Activated T-helper 2 cell treated with anti-CD3 and anti-CD28 coated beads, Interferon-gamma antibody, Interleukin-2, Interleukin-4, amounts not matched to agents 10 μg/mL and 5 μg/mL and 100 μg/mL, durations not matched to agents 14 hours and 24 hours and 36 hours (primary cell): ENCODE measurements at regions of chr6 and their contacts with region 1.

Region 1: DNA sequence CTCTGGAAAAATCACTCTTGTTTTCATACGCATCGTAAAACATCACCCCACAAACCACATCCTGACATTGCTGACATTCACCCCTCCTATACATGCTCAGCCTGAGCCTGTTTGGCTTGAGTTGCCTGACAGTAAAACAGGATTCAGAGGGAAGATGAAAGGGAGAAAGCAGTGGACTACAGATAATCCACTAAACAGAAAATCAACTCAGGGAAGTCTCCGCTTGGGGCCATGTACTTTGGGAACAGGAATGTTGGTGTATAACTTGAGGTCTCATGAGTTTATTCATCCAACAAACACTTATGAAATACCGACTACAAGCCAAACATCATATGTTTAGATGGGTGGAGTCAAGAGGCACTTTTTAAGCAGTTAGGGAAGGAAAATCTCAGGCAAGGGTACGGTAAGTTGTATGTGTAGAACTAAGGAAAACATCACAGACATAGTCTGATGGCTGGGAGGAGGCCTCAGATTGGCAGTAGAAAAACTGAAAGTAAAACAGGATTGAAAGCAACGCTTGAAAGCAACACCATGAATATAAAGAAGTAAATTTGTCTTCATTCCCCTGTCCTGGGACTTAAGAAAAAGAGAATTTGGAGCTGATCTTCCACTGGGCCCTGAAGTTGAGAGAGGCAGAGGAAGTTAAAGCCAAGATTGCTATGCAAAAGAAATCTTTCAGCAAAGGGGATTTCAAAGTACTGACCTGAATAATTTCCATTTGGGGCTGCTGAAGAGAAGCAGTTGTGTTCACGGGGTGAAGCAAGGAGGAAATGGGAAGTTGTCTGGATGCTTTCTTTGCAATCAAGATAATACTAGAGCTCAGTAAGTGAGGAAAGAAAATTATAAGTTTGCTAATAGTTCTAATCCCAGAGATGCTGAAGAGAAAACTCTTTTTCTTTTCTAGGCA is 28.8 kb downstream of the PDE7B start:
- DNase-seq: peak; percentile 64
- H3K4me3 Mint-ChIP-seq: peak overlapping the region; percentile 82
- H3K27ac Mint-ChIP-seq: peak overlapping the region; percentile 98
- H3K4me1 Mint-ChIP-seq: peaks cover 66% of the 10 kb centered on the region
- H3K27me3 Mint-ChIP-seq: no peaks in the 10 kb centered on the region

Region 2: DNA sequence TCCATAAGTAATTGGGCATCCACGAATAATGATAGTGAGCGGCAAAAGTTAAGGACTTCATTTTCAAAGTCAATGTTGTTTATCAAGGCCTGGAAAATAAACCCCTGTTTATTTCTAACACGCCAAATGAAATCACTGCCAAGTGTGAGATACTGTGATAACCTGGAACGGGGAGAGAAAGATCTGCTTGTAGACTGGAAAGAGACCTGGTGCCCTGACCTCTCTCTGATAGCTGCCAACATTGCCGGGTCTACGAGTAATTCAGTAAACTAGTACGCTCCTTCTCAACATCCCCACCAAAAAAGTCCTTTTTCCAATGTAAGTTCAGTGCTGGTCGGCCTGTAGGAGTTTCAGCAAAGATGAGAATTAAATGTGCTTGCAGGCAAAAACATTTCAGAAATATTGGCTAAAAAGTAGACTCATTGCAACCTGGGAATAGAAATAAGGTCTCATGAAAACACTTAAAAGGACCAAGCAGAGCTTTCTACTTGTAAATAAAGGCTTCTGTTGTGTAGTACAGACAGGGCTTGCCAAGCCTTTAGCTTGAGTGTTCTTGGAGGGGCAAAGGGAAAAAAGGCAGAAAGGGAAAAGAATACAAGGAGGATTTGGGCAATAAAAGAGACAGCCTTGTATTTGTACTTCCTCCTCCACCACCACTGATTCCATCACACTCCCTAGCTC is 15.1 kb after region 1 on chr6:
- intact Hi-C with region 1: loop called (anchors 2 kb)
- DNase-seq: no peak
- H3K4me3 Mint-ChIP-seq: no peak overlapping the region
- H3K27ac Mint-ChIP-seq: no peak overlapping the region
- H3K4me1 Mint-ChIP-seq: peaks cover 24% of the 10 kb centered on the region
- H3K27me3 Mint-ChIP-seq: no peaks in the 10 kb centered on the region

Region 3: DNA sequence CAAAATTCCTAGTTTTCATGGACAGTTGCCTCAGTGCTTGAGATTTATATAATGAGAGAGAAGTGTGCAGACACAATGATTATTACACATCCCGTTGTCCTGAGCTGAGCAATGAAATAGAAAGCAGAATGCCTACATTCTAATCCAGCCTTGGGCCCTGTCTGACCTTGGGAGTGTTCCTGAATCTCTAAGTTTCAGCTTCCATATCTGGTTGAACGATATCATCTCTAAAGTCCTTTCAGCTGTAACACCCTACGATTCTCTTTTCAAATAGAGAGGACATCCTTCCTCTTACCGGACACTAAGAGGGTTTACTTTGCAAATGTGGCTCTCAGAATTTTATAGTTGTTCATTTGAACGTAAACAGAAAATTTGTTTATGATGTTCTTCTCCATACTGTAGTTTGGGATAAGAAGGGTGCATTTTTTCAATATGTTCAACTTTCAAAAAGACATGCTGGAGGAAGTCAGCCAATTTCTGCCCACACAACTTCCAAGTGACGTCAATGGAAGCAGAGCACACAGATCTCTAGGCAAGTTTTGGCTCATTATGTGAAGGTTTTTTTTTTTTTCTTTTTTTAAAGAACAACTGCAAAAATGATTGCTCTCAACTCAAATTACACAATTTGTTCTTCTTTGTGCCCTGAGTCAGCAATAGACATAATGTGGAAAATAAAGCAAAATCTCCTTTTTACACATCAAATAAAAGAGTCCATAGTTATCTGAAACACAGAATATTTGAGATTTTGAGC is 21.6 kb after region 1 on chr6:
- intact Hi-C with region 1: loop called (anchors 2 kb)
- DNase-seq: no peak
- H3K4me3 Mint-ChIP-seq: peak overlapping the region; percentile 52
- H3K27ac Mint-ChIP-seq: peak overlapping the region; percentile 86
- H3K4me1 Mint-ChIP-seq: peaks cover 47% of the 10 kb centered on the region
- H3K27me3 Mint-ChIP-seq: no peaks in the 10 kb centered on the region

Region 4: DNA sequence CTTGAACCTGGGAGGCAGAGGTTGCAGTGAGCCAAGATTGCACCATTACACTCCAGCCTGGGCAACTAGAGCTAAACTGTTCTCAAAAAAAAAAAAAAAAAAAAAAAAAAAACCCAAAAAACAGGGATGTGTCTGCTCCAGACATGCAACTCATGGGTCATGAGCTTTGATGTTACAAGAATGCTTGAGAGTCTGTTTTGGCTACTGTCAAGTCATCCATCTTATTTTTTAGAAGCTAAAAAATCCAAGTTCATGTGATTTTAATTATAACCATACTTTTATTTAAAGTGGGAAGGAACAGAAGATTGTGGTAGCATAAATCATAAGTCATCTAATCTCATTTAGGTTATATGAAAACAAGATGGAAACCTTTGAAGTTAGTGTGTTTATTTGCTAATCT is 91.8 kb after region 1 on chr6:
- intact Hi-C with region 1: no loop called
- DNase-seq: no peak
- H3K4me3 Mint-ChIP-seq: no peak overlapping the region
- H3K27ac Mint-ChIP-seq: no peak overlapping the region
- H3K4me1 Mint-ChIP-seq: peaks cover 9% of the 10 kb centered on the region
- H3K27me3 Mint-ChIP-seq: no peaks in the 10 kb centered on the region

Region 5: GRCh38 chr6:136289579-136290409 is 409.5 kb after region 1 on chr6 and contains the start of gene BCLAF1:
- intact Hi-C with region 1: loop called (anchors 10 kb)
- DNase-seq: peak; percentile 100
- H3K4me3 Mint-ChIP-seq: peak within 1 kb of the TSS; percentile 100
- H3K27ac Mint-ChIP-seq: peak within 1 kb of the TSS; percentile 100
- H3K4me1 Mint-ChIP-seq: peaks cover 32% of the 10 kb centered on the region
- H3K27me3 Mint-ChIP-seq: no peaks in the 10 kb centered on the region
- total RNA-seq, gene BCLAF1: 228 and 242 TPM in 2 replicates